Activated T-helper 2 cell treated with anti-CD3 and anti-CD28 coated beads, Interferon-gamma antibody, Interleukin-2, Interleukin-4, amounts not matched to agents 10 μg/mL and 5 μg/mL and 100 μg/mL, durations not matched to agents 14 hours and 24 hours and 36 hours (primary cell): ENCODE measurements at regions of chr1 and their contacts with region 1.

Region 1: GRCh38 chr1:161749509-161750407 is at the start of gene DUSP12:
- DNase-seq: peak; percentile 83
- H3K4me3 Mint-ChIP-seq: peak within 1 kb of the TSS; percentile 99
- H3K27ac Mint-ChIP-seq: peak within 1 kb of the TSS; percentile 99
- H3K4me1 Mint-ChIP-seq: peaks cover 39% of the 10 kb centered on the region
- H3K27me3 Mint-ChIP-seq: peaks cover 11% of the 10 kb centered on the region
- total RNA-seq, gene DUSP12: 31.2 and 38.0 TPM in 2 replicates

Region 2: GRCh38 chr1:161726596-161727457 is 22.9 kb before region 1 on chr1:
- intact Hi-C with region 1: loop called (anchors 1 kb)
- DNase-seq: peak; percentile 66
- H3K4me3 Mint-ChIP-seq: peak overlapping the region; percentile 85
- H3K27ac Mint-ChIP-seq: peak overlapping the region; percentile 19
- H3K4me1 Mint-ChIP-seq: peaks cover 53% of the 10 kb centered on the region
- H3K27me3 Mint-ChIP-seq: peaks cover 49% of the 10 kb centered on the region

Region 3: DNA sequence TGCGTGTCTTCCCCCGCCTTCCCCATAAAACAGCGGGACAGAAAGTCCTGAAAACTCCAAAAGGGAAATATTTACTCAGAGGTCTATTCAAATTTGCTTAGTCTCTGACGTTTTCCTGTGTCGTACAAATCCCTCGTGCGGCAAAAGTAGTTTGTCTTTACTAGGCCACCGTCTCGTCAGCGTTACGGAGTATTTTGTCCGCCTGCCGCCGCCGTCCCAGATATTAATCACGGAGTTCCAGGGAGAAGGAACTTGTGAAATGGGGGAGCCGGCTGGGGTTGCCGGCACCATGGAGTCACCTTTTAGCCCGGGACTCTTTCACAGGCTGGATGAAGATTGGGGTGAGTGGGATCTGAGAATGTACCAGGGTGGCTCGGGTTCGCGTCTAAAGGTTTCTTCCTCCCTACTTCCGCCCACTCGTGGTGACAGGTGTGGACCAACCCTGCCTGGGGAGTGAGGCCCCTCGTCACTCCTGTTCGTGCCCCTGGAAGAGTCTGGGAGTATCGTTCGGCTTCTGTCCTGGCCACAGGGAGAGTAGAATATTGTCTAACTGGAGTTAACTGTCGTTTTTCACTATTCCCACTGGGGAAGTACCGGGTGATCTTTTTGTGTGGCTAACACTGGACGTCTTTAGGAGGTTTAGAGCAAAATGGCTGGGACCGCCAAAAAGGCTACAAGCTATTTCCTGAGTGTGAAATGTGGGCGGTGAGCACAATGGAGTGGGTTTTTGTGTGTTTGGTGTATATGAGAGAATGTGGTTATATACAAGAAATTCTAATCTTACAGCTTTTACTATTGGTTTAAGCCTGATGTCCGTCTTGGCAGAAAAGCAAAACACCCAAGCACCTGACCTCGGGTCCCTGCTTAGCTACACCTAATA is 16.6 kb after region 1 on chr1 and contains the start of gene ATF6:
- intact Hi-C with region 1: loop called (anchors 1 kb)
- DNase-seq: peak; percentile 77
- H3K4me3 Mint-ChIP-seq: peak within 1 kb of the TSS; percentile 97
- H3K27ac Mint-ChIP-seq: peak within 1 kb of the TSS; percentile 96
- H3K4me1 Mint-ChIP-seq: peaks cover 40% of the 10 kb centered on the region
- H3K27me3 Mint-ChIP-seq: no peaks in the 10 kb centered on the region
- total RNA-seq, gene ATF6: 29.6 and 30.4 TPM in 2 replicates

Region 4: GRCh38 chr1:162256287-162256686 is 506.5 kb after region 1 on chr1:
- intact Hi-C with region 1: no loop called
- DNase-seq: no peak
- H3K4me3 Mint-ChIP-seq: no peak overlapping the region
- H3K27ac Mint-ChIP-seq: no peak overlapping the region
- H3K4me1 Mint-ChIP-seq: no peaks in the 10 kb centered on the region
- H3K27me3 Mint-ChIP-seq: peaks cover 10% of the 10 kb centered on the region